Naive thymus-derived CD4-positive, alpha-beta T cell (primary cell): ENCODE measurements at regions of chr10 and their contacts with region 1.

Region 1: DNA sequence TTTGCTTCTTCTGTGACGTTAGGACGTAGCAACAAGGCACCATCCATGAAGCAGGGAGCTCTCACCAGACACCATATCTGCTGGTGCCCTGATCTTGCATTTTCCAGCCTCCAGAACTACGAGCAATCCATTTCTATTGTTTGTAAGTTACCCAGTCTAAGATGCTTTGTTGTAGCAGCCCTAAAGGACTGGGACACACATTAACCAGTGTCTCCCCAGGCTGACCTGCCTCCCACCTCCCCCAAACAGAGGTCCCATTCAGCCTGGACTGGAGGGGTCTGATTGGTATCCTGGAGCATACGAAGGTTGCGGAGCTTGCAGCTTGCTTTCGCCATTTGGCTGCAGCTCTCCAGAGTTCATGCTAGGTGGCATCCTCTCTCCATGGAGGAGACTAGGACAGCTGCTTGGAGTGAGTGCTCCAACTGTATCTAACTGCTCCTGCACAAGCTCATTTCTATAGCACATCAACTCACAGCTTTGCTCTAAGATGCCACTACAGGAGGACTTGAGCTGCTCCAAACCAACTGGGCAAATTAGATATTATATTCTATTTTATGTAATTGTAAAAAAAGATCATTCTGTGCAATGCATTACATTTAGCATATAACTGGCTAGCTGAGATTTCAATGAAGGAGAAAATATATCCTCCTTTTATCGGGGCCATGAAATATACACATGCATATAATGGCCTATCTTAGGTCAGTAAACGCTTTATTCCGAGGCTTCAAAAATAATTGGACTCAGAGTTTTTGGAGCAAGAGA is 8.0 kb upstream of the GRK5 start:
- DNase-seq: peak in 8 of 9 donors; percentile 42 to 72 (median 58)
- ATAC-seq: peak; percentile 93
- H3K4me3 ChIP-seq: no peak overlapping the region
- H3K4me3 Mint-ChIP-seq: peak overlapping the region in 1 of 10 donors; percentile 35
- H3K27ac ChIP-seq: no peak overlapping the region
- H3K27ac Mint-ChIP-seq: peak overlapping the region in 3 of 9 donors; percentile 46 to 73 (median 56)
- H3K4me1 ChIP-seq: no peaks in the 10 kb centered on the region
- H3K4me1 Mint-ChIP-seq: peaks cover 4 to 30% (median 9%) of the 10 kb centered on the region in 7 donors
- H3K27me3 ChIP-seq: no peaks in the 10 kb centered on the region
- H3K27me3 Mint-ChIP-seq: peaks cover 0 to 5% (median 0%) of the 10 kb centered on the region in 5 donors

Region 2: GRCh38 chr10:119139464-119140067 is 59.8 kb before region 1 on chr10:
- CTCF ChIA-PET with region 1: interaction called, 8 read pairs
- POLR2A ChIA-PET with region 1: no interaction called
- intact Hi-C with region 1: loop called (anchors 1 to 2 kb)
- DNase-seq: peak; percentile 18 to 58 (median 42)
- ATAC-seq: peak; percentile 85
- H3K4me3 ChIP-seq: no peak overlapping the region
- H3K4me3 Mint-ChIP-seq: no peak overlapping the region
- H3K27ac ChIP-seq: no peak overlapping the region
- H3K27ac Mint-ChIP-seq: peak overlapping the region; percentile 49 to 92 (median 62)
- H3K4me1 ChIP-seq: no peaks in the 10 kb centered on the region
- H3K4me1 Mint-ChIP-seq: peaks cover 5 to 26% (median 11%) of the 10 kb centered on the region in 7 donors
- H3K27me3 ChIP-seq: no peaks in the 10 kb centered on the region
- H3K27me3 Mint-ChIP-seq: no peaks in the 10 kb centered on the region

Region 3: GRCh38 chr10:119165171-119166110 is 34.0 kb before region 1 on chr10 and contains the start of gene SFXN4:
- CTCF ChIA-PET with region 1: interaction called, 3 read pairs
- POLR2A ChIA-PET with region 1: no interaction called
- intact Hi-C with region 1: loop called in 1 of 2 experiments (anchors 2 kb)
- DNase-seq: peak; percentile 72 to 87 (median 84)
- ATAC-seq: peak; percentile 98
- H3K4me3 ChIP-seq: peak within 1 kb of the TSS; percentile 95
- H3K4me3 Mint-ChIP-seq: peak within 1 kb of the TSS; percentile 89 to 95 (median 92)
- H3K27ac ChIP-seq: peak within 1 kb of the TSS; percentile 88
- H3K27ac Mint-ChIP-seq: peak within 1 kb of the TSS; percentile 85 to 98 (median 95)
- H3K4me1 ChIP-seq: peaks cover 12 to 15% of the 10 kb centered on the region in 2 donors
- H3K4me1 Mint-ChIP-seq: peaks cover 22 to 39% (median 32%) of the 10 kb centered on the region in 7 donors
- H3K27me3 ChIP-seq: no peaks in the 10 kb centered on the region
- H3K27me3 Mint-ChIP-seq: no peaks in the 10 kb centered on the region
- total RNA-seq, gene SFXN4: 11.8 to 28.1 (median 23.1) TPM

Region 4: DNA sequence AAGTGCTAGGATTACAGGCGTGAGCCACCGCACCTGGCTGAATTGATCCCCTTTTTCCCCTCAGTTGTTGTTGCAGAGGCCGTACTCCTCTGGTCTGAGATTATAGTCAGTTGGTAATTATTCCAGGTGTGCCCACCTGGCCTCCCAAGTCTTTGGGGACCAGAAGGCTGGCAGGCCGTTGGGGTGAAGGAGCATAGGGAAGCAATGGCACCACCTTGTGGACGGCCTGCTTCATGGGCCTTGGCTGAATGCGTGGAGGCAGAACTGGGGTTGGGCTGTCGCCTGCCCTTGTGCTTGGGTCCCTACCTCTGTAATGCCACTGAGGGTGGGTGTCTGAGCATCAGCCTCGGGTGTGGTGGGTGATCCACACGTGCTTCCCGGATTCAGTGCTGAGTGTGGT is 217.4 kb after region 1 on chr10:
- CTCF ChIA-PET with region 1: interaction called, 23 read pairs
- POLR2A ChIA-PET with region 1: no interaction called
- intact Hi-C with region 1: loop called (anchors 1 kb)
- DNase-seq: peak; percentile 44 to 69 (median 62)
- ATAC-seq: peak; percentile 89
- H3K4me3 ChIP-seq: no peak overlapping the region
- H3K4me3 Mint-ChIP-seq: no peak overlapping the region
- H3K27ac ChIP-seq: no peak overlapping the region
- H3K27ac Mint-ChIP-seq: no peak overlapping the region
- H3K4me1 ChIP-seq: no peaks in the 10 kb centered on the region
- H3K4me1 Mint-ChIP-seq: peaks cover 0 to 5% (median 0%) of the 10 kb centered on the region in 7 donors
- H3K27me3 ChIP-seq: no peaks in the 10 kb centered on the region
- H3K27me3 Mint-ChIP-seq: no peaks in the 10 kb centered on the region

Region 5: GRCh38 chr10:119445311-119445934 is 246.0 kb after region 1 on chr10:
- CTCF ChIA-PET with region 1: interaction called, 38 read pairs
- POLR2A ChIA-PET with region 1: interaction called, 3 read pairs
- intact Hi-C with region 1: loop called (anchors 1 kb)
- DNase-seq: peak; percentile 64 to 89 (median 76)
- ATAC-seq: peak; percentile 85
- H3K4me3 ChIP-seq: no peak overlapping the region
- H3K4me3 Mint-ChIP-seq: peak overlapping the region in 1 of 10 donors; percentile 60
- H3K27ac ChIP-seq: no peak overlapping the region
- H3K27ac Mint-ChIP-seq: peak overlapping the region in 8 of 9 donors; percentile 6 to 81 (median 52)
- H3K4me1 ChIP-seq: no peaks in the 10 kb centered on the region
- H3K4me1 Mint-ChIP-seq: peaks cover 12 to 23% (median 17%) of the 10 kb centered on the region in 7 donors
- H3K27me3 ChIP-seq: no peaks in the 10 kb centered on the region
- H3K27me3 Mint-ChIP-seq: no peaks in the 10 kb centered on the region

Region 6: DNA sequence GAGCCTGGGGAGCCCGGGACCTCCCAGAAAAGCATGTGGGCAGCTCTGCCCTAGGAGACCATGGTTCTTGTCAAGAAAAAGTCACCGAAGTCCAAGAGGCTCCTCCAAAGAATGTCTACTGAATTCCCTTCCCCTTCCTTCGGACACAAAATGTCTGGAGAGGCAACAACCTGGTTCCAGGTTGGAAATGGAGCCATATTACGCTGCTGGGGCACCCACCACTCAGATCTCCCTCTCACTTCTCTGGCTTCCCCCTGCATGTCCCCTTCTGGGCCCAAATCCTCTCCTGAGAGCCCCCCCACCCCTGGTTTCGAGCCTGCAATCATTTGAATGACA is 290.5 kb after region 1 on chr10:
- CTCF ChIA-PET with region 1: interaction called, 4 read pairs
- POLR2A ChIA-PET with region 1: interaction called, 5 read pairs
- intact Hi-C with region 1: loop called in 1 of 2 experiments (anchors 2 kb)
- DNase-seq: no peak
- ATAC-seq: no peak
- H3K4me3 ChIP-seq: peak overlapping the region; percentile 55
- H3K4me3 Mint-ChIP-seq: peak overlapping the region; percentile 53 to 92 (median 84)
- H3K27ac ChIP-seq: peak overlapping the region; percentile 83
- H3K27ac Mint-ChIP-seq: peak overlapping the region; percentile 80 to 98 (median 92)
- H3K4me1 ChIP-seq: peaks cover 24 to 36% of the 10 kb centered on the region in 2 donors
- H3K4me1 Mint-ChIP-seq: peaks cover 19 to 66% (median 59%) of the 10 kb centered on the region in 7 donors
- H3K27me3 ChIP-seq: no peaks in the 10 kb centered on the region
- H3K27me3 Mint-ChIP-seq: no peaks in the 10 kb centered on the region

Region 7: GRCh38 chr10:119602241-119603095 is 403.1 kb after region 1 on chr10:
- CTCF ChIA-PET with region 1: interaction called, 13 read pairs
- POLR2A ChIA-PET with region 1: interaction called, 3 read pairs
- intact Hi-C with region 1: loop called in 1 of 2 experiments (anchors 2 kb)
- DNase-seq: peak in 5 of 9 donors; percentile 16 to 36 (median 20)
- ATAC-seq: peak; percentile 77
- H3K4me3 ChIP-seq: no peak overlapping the region
- H3K4me3 Mint-ChIP-seq: peak overlapping the region in 1 of 10 donors; percentile 43
- H3K27ac ChIP-seq: no peak overlapping the region
- H3K27ac Mint-ChIP-seq: peak overlapping the region in 1 of 9 donors; percentile 34
- H3K4me1 ChIP-seq: peaks cover 0 to 2% of the 10 kb centered on the region in 2 donors
- H3K4me1 Mint-ChIP-seq: peaks cover 4 to 22% (median 14%) of the 10 kb centered on the region in 7 donors
- H3K27me3 ChIP-seq: no peaks in the 10 kb centered on the region
- H3K27me3 Mint-ChIP-seq: peaks cover 0 to 6% (median 0%) of the 10 kb centered on the region in 5 donors